ENCODE measurements at regions of chr11 and their contacts with region 1.

Region 1: GRCh38 chr11:65859200-65859811 is 927 bp upstream of the MUS81 start:
- DNase-seq: peak; percentile 98 to 99
- H3K4me3 ChIP-seq: peak overlapping the region; percentile 87
- H3K4me3 Mint-ChIP-seq: peak overlapping the region; percentile 97
- H3K27ac Mint-ChIP-seq: peak overlapping the region; percentile 95
- H3K4me1 ChIP-seq: peaks cover 15% of the 10 kb centered on the region
- H3K4me1 Mint-ChIP-seq: peaks cover 30% of the 10 kb centered on the region
- H3K27me3 ChIP-seq: no peaks in the 10 kb centered on the region
- H3K27me3 Mint-ChIP-seq: no peaks in the 10 kb centered on the region
- CTCF ChIP-seq: peak in 1 of 2 experiments; percentile 31

Region 2: DNA sequence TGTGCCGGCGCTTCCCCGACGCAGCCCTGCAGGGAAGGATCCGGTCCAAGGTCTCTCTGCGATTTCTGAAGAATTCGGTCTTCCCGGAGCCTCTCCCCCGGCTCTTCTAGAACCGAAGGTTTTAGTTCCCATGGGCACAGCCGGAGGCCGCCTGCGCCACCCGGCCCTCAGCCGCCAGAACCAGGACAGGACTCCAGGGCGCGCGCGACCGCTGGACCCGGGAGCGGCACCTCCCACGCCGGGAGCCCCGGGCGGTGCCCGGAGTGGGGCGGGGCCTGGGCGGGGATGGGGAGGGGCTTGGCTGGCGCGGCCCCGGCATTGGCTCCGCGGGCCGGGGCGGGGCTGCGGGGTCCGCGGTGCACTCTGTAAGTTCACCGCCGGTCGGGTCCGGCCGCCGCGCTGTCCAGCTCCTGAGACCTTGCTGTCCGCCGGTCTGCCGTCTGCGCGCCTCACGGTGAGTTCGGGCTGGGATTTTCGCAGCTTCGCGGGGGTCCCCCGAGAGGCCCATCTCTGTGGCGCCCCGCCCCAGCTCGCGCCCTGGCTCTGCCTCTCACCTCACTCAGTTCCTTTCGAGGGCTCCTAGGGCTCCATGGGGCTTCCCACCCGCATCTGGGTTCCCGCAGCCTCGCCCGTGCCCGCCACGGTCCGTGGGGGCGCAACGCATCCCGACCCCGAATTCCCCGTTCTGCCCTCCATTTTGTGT is 544.7 kb before region 1 on chr11 and contains the start of gene CDC42EP2:
- CTCF ChIA-PET with region 1: no interaction called
- POLR2A ChIA-PET with region 1: no interaction called
- intact Hi-C with region 1: no loop called
- DNase-seq: peak; percentile 87 to 94
- H3K4me3 ChIP-seq: peak within 1 kb of the TSS; percentile 99
- H3K4me3 Mint-ChIP-seq: peak within 1 kb of the TSS; percentile 81
- H3K27ac Mint-ChIP-seq: peak within 1 kb of the TSS; percentile 80
- H3K4me1 ChIP-seq: peaks cover 33% of the 10 kb centered on the region
- H3K4me1 Mint-ChIP-seq: peaks cover 28% of the 10 kb centered on the region
- H3K27me3 ChIP-seq: no peaks in the 10 kb centered on the region
- H3K27me3 Mint-ChIP-seq: no peaks in the 10 kb centered on the region
- CTCF ChIP-seq: peak in 1 of 2 experiments; percentile 10
- total RNA-seq, gene CDC42EP2: 38.0 and 40.7 TPM in 2 replicates

Region 3: GRCh38 chr11:65652511-65653231 is 206.6 kb before region 1 on chr11:
- CTCF ChIA-PET with region 1: interaction called, 4 read pairs
- POLR2A ChIA-PET with region 1: no interaction called
- intact Hi-C with region 1: loop called (anchors 5 kb)
- DNase-seq: peak; percentile 93 to 96
- H3K4me3 ChIP-seq: peak overlapping the region; percentile 59
- H3K4me3 Mint-ChIP-seq: peak overlapping the region; percentile 76
- H3K27ac Mint-ChIP-seq: peak overlapping the region; percentile 96
- H3K4me1 ChIP-seq: peaks cover 18% of the 10 kb centered on the region
- H3K4me1 Mint-ChIP-seq: peaks cover 18% of the 10 kb centered on the region
- H3K27me3 ChIP-seq: no peaks in the 10 kb centered on the region
- H3K27me3 Mint-ChIP-seq: no peaks in the 10 kb centered on the region
- CTCF ChIP-seq: no peak

Region 4: DNA sequence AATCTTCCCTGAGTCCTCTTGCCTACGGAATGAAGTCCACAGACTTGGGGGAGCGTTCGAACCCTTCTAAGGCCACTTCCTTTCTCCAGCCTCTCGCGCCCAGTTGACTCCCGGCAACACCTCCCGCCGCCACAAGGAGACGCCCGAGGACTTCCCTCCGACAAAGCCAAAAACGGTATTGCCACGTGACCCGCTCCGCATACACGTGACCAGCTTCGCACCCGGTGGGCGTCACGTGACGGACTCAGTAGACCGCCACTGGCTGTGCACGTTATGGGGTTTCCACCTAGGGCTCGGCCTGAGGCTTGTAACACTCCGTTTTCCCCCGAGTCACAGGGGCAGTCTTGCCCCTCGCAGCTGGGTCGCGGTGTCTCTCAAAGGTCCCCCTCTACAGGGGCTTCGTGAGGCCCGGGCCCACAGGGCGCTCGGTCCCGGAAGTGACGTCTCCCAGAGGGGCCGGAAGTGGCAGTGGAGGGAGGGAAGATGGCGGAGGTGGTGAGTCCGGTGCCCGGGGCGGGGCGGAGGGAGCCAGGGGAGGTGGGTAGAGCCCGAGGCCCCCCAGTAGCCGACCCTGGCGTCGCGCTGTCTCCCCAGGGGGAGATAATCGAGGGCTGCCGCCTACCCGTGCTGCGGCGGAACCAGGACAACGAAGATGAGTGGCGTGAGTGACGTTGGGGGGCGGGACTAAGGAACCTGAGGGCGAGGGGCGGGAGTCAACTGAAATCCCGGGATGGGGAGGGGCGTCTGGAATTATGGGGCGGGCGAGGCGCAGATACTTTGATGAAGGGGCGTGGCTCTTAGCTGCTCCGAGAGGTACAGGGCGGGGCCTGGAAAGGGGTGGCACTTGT is 147.3 kb before region 1 on chr11 and contains the start of gene KAT5:
- CTCF ChIA-PET with region 1: interaction called, 27 read pairs
- POLR2A ChIA-PET with region 1: interaction called, 13 read pairs
- intact Hi-C with region 1: loop called (anchors 1 kb)
- DNase-seq: peak; percentile 98 to 99
- H3K4me3 ChIP-seq: peak within 1 kb of the TSS; percentile 66
- H3K4me3 Mint-ChIP-seq: peak within 1 kb of the TSS; percentile 83
- H3K27ac Mint-ChIP-seq: peak within 1 kb of the TSS; percentile 98
- H3K4me1 ChIP-seq: peaks cover 21% of the 10 kb centered on the region
- H3K4me1 Mint-ChIP-seq: peaks cover 13% of the 10 kb centered on the region
- H3K27me3 ChIP-seq: no peaks in the 10 kb centered on the region
- H3K27me3 Mint-ChIP-seq: no peaks in the 10 kb centered on the region
- CTCF ChIP-seq: peak; percentile 97 to 98
- total RNA-seq, gene KAT5: 60.2 and 70.1 TPM in 2 replicates

Region 5: GRCh38 chr11:65844231-65845190 is 14.8 kb before region 1 on chr11:
- CTCF ChIA-PET with region 1: interaction called, 19 read pairs
- POLR2A ChIA-PET with region 1: interaction called, 10 read pairs
- intact Hi-C with region 1: no loop called
- DNase-seq: no peak
- H3K4me3 ChIP-seq: no peak overlapping the region
- H3K4me3 Mint-ChIP-seq: no peak overlapping the region
- H3K27ac Mint-ChIP-seq: peak overlapping the region; percentile 45
- H3K4me1 ChIP-seq: peaks cover 26% of the 10 kb centered on the region
- H3K4me1 Mint-ChIP-seq: peaks cover 16% of the 10 kb centered on the region
- H3K27me3 ChIP-seq: no peaks in the 10 kb centered on the region
- H3K27me3 Mint-ChIP-seq: no peaks in the 10 kb centered on the region
- CTCF ChIP-seq: no peak

Region 6: DNA sequence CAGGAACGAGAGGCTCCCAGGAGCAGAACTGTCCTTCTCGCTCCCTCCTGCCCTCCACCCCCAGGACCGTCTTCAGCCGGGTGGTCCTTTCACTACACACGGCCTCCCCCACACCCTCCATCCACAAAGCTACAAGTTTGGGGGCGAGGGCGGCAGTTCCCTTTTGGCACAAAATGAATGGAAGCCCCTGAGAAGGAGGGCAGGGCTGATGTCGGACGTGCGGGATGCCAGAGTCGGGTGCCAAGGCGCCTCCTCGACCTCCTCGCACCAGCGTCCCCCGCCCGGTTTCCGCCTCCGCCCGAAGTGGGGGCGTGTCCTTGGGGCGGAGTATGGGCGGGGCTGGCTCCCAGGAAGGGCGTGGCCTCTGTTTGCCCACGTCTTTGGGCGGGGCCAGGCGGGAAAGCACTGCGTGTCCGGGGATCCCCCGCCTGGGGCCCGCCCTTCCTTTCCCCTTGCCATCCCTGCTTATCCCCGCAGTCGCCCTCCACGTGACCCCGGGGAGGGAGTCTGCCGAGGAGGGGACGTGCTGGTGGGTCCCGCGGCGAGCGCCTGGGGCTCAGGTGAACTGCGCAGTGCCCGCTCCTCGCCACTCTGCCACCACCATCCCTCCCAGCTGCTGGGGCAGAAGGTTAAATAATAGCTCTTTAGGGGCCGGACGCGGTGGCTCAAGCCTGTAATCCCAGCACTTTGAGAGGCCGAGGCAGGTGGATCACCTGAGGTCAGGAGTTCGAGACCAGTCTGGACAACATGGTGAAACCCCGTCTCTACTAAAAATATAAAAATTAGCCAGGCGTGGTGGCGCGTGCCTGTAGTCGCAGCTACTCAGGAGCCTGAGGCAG is 14.2 kb after region 1 on chr11:
- CTCF ChIA-PET with region 1: interaction called, 39 read pairs
- POLR2A ChIA-PET with region 1: interaction called, 10 read pairs
- intact Hi-C with region 1: no loop called
- DNase-seq: peak; percentile 89 to 95
- H3K4me3 ChIP-seq: peak overlapping the region; percentile 53
- H3K4me3 Mint-ChIP-seq: peak overlapping the region; percentile 76
- H3K27ac Mint-ChIP-seq: peak overlapping the region; percentile 77
- H3K4me1 ChIP-seq: 0 out of 2 replicates have a peak, but pooled peaks cover 3% of the 10 kb centered on the region
- H3K4me1 Mint-ChIP-seq: peaks cover 6% of the 10 kb centered on the region
- H3K27me3 ChIP-seq: no peaks in the 10 kb centered on the region
- H3K27me3 Mint-ChIP-seq: no peaks in the 10 kb centered on the region
- CTCF ChIP-seq: no peak

Region 7: GRCh38 chr11:66001942-66002647 is 142.8 kb after region 1 on chr11 and contains the starts of genes BANF1 and EIF1AD:
- CTCF ChIA-PET with region 1: interaction called, 5 read pairs
- POLR2A ChIA-PET with region 1: interaction called, 6 read pairs
- intact Hi-C with region 1: loop called (anchors 1 kb)
- DNase-seq: peak; percentile 96 to 97
- H3K4me3 ChIP-seq: peak within 1 kb of the TSS; percentile 92
- H3K4me3 Mint-ChIP-seq: peak within 1 kb of the TSS; percentile 99
- H3K27ac Mint-ChIP-seq: peak within 1 kb of the TSS; percentile 97
- H3K4me1 ChIP-seq: 0 out of 2 replicates have a peak, but pooled peaks cover 7% of the 10 kb centered on the region
- H3K4me1 Mint-ChIP-seq: no peaks in the 10 kb centered on the region
- H3K27me3 ChIP-seq: no peaks in the 10 kb centered on the region
- H3K27me3 Mint-ChIP-seq: no peaks in the 10 kb centered on the region
- CTCF ChIP-seq: no peak
- total RNA-seq, gene BANF1: 295 and 300 TPM in 2 replicates
- total RNA-seq, gene EIF1AD: 51.2 and 55.3 TPM in 2 replicates

Measured in Caco-2 (cell line).